ENCODE measurements at regions of chr4 and their contacts with region 1.

Region 1: GRCh38 chr4:151362404-151363164 is 37.2 kb upstream of the SH3D19 start:
- DNase-seq: peak; percentile 9
- H3K4me3 ChIP-seq: no peak overlapping the region
- H3K27me3 ChIP-seq: 0 out of 2 replicates have a peak, but pooled peaks cover 1% of the 10 kb centered on the region
- CTCF ChIP-seq: peak; percentile 98

Region 2: DNA sequence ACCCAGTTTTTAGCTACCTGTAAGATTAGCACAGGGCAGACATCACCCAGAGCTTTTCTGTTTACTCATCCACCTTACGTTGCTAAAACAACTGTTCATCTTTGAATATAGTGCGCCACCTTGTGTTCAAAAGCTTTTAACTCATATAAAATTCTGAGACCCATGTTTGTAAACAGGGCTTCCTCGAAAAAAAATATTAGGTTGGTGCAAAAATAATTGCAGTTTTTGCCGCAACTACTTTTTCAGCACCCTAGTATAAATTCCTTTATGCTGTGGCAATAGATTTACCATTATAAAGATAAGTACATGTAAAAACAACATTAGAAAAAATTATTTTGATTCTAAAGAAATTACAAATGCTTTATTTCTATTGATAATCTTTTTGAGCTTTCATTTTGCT is 495.4 kb before region 1 on chr4:
- CTCF ChIA-PET with region 1: no interaction called
- POLR2A ChIA-PET with region 1: no interaction called
- DNase-seq: peak; percentile 23
- H3K4me3 ChIP-seq: no peak overlapping the region
- H3K27me3 ChIP-seq: no peaks in the 10 kb centered on the region
- CTCF ChIP-seq: peak; percentile 45

Region 3: GRCh38 chr4:151604238-151604637 is 241.7 kb after region 1 on chr4:
- CTCF ChIA-PET with region 1: interaction called, 10 read pairs
- POLR2A ChIA-PET with region 1: no interaction called
- DNase-seq: no peak
- H3K4me3 ChIP-seq: no peak overlapping the region
- H3K27me3 ChIP-seq: no peaks in the 10 kb centered on the region
- CTCF ChIP-seq: peak; percentile 64